ENCODE measurements at regions of chr10 and their contacts with region 1.

Region 1: DNA sequence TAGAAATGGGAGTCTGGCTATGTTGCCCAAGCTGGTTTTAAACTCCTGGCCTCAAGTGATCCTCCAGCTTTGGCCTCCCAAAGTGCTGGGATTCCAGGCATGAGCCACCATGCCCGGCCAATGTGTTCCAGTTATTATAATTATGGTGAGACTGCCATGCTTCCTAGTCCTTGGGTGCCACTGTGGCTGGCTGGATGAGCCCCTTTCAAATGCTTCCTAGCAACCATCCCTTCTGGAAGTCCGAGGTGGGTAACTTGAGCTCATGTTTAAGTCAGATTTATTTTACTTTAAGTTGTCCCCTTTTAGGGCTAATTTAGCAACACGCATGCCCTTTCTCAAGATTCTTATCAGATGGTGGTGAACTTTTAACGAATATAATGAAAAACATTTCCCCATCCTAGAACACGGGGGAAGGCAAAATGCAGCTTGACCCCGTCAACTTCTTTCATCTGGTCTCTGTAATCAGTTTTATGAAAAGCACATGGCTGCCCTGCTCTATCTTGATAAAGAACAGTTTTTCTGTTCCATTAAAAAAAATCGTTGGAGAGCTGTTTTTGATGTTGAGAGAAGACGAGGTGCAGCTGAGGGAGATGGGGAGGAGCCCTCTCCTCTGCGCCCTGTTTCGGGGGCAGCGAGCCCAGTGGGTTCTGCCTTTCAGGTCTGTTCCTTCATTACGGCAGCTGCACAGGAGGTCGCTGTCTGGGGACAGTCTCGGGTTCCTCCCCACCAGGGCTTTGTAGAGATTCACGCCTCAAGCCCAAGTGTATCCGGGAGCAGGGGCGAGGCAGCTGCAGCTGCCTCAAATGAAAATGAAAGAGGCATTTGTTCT is 61.0 kb upstream of the MKI67 start:
- DNase-seq: peak; percentile 65
- ATAC-seq: peak; percentile 91
- H3K4me3 Mint-ChIP-seq: peak overlapping the region; percentile 62
- H3K27ac Mint-ChIP-seq: peak overlapping the region; percentile 70
- H3K4me1 Mint-ChIP-seq: peaks cover 23% of the 10 kb centered on the region
- H3K27me3 Mint-ChIP-seq: peaks cover 3% of the 10 kb centered on the region

Region 2: DNA sequence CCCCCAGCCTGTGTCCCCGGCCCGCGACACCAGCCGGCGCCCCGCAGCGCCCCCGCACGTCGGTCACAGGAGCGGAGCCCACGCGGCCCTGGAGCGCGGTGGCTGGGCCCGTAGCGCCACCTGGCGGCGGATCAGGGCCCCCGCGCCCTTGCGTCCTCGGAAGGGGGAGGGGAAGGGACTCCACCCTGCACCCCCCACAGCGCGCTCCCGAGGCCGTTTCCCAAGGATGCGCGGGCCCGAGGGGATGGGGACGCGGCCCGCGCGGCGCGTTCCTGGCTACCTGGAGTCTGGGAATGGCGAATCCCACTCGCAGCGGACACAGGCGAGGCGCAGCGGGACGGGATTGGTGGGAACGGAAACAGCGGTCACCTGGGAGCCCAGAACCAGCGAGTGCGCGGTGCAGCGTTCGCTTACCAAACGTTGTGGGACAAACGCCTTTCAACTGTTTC is 37.1 kb before region 1 on chr10:
- CTCF ChIA-PET with region 1: interaction called, 14 read pairs
- POLR2A ChIA-PET with region 1: interaction called, 5 read pairs
- DNase-seq: peak; percentile 83
- ATAC-seq: peak; percentile 98
- H3K4me3 Mint-ChIP-seq: peak overlapping the region; percentile 71
- H3K27ac Mint-ChIP-seq: no peak overlapping the region
- H3K4me1 Mint-ChIP-seq: peaks cover 23% of the 10 kb centered on the region
- H3K27me3 Mint-ChIP-seq: peaks cover 2% of the 10 kb centered on the region

Region 3: GRCh38 chr10:128206676-128207075 is 19.5 kb after region 1 on chr10:
- CTCF ChIA-PET with region 1: interaction called, 61 read pairs
- POLR2A ChIA-PET with region 1: interaction called, 3 read pairs
- DNase-seq: no peak
- ATAC-seq: no peak
- H3K4me3 Mint-ChIP-seq: no peak overlapping the region
- H3K27ac Mint-ChIP-seq: no peak overlapping the region
- H3K4me1 Mint-ChIP-seq: peaks cover 5% of the 10 kb centered on the region
- H3K27me3 Mint-ChIP-seq: peaks cover 11% of the 10 kb centered on the region

Region 4: DNA sequence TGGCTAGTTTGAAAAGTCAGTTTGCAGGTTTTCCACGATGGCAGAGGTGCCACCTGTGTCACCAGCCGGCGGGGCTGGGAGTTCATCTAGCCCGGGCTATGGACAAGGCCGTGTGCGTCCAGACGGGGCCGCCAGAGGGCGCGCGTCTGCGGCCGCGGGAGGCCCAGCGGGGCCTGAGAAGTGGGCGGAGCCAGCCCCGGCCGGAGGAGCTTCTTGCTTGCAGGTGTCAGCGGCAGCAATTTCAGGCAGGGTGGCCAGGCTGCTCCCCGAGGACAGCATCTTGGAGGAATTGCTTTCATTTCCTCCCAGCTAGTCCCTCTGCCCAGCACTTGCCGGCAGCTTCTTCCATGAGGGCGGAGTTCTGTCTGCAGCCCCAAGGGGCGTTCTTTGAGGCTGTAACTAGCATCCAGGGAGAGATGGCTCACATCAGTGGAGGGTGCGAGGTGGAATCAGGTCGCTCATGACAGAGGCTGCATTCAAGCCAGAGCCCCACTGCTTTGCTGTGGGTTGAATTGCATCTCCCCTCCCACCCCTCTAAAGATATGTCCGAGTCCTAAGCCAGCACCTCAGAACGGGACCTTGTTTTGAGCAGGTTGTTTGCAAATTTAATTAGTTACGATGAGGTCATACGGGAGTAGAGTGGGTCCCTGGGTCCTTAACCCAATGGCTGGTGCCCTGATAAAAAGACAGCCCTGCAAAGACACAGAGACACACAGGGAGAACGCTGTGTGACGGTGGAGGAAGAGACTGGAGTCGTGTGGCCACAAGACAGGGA is 25.0 kb after region 1 on chr10:
- CTCF ChIA-PET with region 1: interaction called, 61 read pairs
- POLR2A ChIA-PET with region 1: interaction called, 3 read pairs
- DNase-seq: peak; percentile 87
- ATAC-seq: peak; percentile 80
- H3K4me3 Mint-ChIP-seq: peak overlapping the region; percentile 71
- H3K27ac Mint-ChIP-seq: peak overlapping the region; percentile 78
- H3K4me1 Mint-ChIP-seq: peaks cover 16% of the 10 kb centered on the region
- H3K27me3 Mint-ChIP-seq: peaks cover 10% of the 10 kb centered on the region